ENCODE measurements at regions of chr6 and their contacts with region 1.

Region 1: GRCh38 chr6:144265390-144265789 is 19.7 kb upstream of the UTRN start:
- DNase-seq: peak; percentile 19
- ATAC-seq: peak; percentile 80
- H3K4me3 Mint-ChIP-seq: peak overlapping the region; percentile 51
- H3K27ac Mint-ChIP-seq: peak overlapping the region; percentile 74
- H3K4me1 Mint-ChIP-seq: peaks cover 49% of the 10 kb centered on the region
- H3K27me3 Mint-ChIP-seq: peaks cover 2% of the 10 kb centered on the region; the same call in 1 of the 2 replicates
- CTCF ChIP-seq: no peak

Region 2: DNA sequence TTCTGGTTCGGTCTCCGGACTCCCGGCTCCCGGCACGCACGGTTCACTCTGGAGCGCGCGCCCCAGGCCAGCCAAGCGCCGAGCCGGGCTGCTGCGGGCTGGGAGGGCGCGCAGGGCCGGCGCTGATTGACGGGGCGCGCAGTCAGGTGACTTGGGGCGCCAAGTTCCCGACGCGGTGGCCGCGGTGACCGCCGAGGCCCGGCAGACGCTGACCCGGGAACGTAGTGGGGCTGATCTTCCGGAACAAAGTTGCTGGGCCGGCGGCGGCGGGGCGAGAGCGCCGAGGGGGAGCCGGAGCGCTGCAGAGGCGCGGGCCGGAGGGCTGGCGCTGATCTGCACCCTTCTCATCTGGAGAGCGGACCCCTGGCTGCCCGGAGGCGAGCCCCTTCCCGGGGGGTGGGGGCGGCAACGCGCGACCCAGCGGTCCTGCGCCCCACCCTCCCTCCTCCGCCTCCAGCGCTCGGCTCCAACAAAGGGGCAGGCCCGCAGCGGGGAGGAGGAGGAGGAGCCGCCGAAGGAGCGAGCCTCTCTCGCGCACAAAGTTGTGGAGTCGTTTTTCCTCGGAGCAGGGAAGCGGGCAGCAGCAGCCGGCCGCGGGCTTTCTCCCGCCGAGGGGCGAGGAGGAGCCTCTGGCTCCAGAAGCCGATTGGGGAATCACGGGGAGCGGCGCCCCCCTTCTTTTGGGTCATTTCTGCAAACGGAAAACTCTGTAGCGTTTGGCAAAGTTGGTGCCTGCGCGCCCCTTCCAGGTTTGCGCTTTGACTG is 19.6 kb after region 1 on chr6 and contains the start of gene UTRN:
- CTCF ChIA-PET with region 1: interaction called, 23 read pairs
- POLR2A ChIA-PET with region 1: interaction called, 13 read pairs
- DNase-seq: peak; percentile 89
- ATAC-seq: peak; percentile 71
- H3K4me3 Mint-ChIP-seq: peak within 1 kb of the TSS; percentile 100
- H3K27ac Mint-ChIP-seq: peak within 1 kb of the TSS; percentile 96
- H3K4me1 Mint-ChIP-seq: peaks cover 35% of the 10 kb centered on the region
- H3K27me3 Mint-ChIP-seq: no peaks in the 10 kb centered on the region; the same call in 1 of the 2 replicates
- CTCF ChIP-seq: no peak
- total RNA-seq, gene UTRN: 125 to 127 TPM (median 125 TPM) in 3 replicates

Region 3: GRCh38 chr6:144334131-144334708 is 68.8 kb after region 1 on chr6:
- CTCF ChIA-PET with region 1: no interaction called
- POLR2A ChIA-PET with region 1: no interaction called
- DNase-seq: no peak
- ATAC-seq: no peak
- H3K4me3 Mint-ChIP-seq: no peak overlapping the region
- H3K27ac Mint-ChIP-seq: peak overlapping the region; percentile 92
- H3K4me1 Mint-ChIP-seq: peaks cover 78% of the 10 kb centered on the region
- H3K27me3 Mint-ChIP-seq: no peaks in the 10 kb centered on the region
- CTCF ChIP-seq: no peak

Region 4: GRCh38 chr6:144482142-144482541 is 216.8 kb after region 1 on chr6:
- CTCF ChIA-PET with region 1: interaction called, 11 read pairs
- POLR2A ChIA-PET with region 1: no interaction called
- DNase-seq: peak; percentile 74
- ATAC-seq: peak; percentile 84
- H3K4me3 Mint-ChIP-seq: no peak overlapping the region
- H3K27ac Mint-ChIP-seq: no peak overlapping the region; the same call in 1 of the 2 replicates
- H3K4me1 Mint-ChIP-seq: peaks cover 4% of the 10 kb centered on the region; the same call in 1 of the 2 replicates
- H3K27me3 Mint-ChIP-seq: no peaks in the 10 kb centered on the region
- CTCF ChIP-seq: peak; percentile 28; the same call in 1 of the 2 replicates

Measured in WTC11 (cell line).